ENCODE measurements at regions of chr10 and their contacts with region 1.

Region 1: DNA sequence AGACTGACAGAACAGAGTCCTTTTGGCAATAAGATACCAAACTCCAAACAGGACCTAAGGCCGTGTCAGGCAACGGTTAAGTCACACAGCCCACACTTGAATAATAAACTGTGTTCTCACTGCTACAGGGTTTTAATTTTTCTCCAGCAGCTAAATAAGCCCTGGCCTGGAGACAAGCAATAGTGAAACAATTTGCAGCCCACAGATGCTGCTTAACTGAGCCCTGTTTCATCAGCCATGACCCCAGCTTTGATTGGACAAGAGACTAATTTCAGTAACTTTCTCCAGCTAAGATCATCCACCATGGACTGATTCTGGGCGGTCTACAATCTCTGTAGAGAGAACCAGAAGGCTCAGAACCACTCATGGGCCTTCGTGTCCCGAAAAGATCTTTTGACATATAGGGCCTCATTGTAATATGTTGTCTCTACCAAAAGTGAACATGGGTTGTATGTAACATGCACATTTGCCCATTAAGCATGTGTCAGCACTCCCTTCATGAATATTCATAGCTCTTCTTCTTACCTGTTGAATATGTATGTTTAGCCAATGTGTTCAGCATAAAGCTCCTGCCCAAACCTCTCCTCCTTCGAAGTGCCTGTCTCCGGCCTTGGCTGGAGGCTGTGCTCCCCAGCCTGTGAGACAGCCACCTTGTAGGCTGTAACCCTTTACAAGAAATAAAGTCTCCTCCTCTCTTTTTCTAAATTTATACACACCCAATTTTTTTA is 223.1 kb upstream of the AKR1E2 start:
- DNase-seq: no peak
- H3K4me3 ChIP-seq: no peak overlapping the region
- H3K27ac ChIP-seq: no peak overlapping the region
- H3K4me1 ChIP-seq: no peaks in the 10 kb centered on the region
- H3K27me3 ChIP-seq: no peaks in the 10 kb centered on the region
- CTCF ChIP-seq: no peak

Region 2: DNA sequence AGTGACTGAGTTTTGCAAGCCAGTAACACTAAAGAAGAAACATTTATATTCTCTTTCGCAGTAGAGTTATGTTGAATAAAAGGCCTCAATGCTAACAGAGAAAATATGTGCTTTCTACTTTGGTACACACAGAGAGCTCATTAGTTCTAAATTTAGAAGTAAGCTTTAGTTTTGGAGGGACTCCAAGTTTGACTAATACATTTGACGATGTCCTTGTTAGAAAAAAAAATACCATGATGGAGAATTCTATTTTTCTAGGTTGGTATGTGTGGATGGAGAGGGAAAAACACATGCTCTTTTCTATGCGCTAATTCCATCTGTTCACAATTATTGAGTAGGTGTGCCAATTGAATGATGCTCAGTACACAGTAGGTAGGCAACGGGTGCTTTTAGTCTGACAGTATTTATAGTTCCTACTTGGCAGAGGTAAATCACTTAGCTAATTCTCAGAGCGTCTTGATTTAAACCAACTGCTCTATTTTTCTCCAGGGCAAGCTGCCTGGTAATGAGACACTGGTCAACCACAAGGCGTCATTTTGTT is 104.1 kb before region 1 on chr10:
- CTCF ChIA-PET with region 1: no interaction called
- dilution Hi-C with region 1: loop called (anchors 5 kb)
- in situ Hi-C with region 1: no loop called
- intact Hi-C with region 1: no loop called
- DNase-seq: peak; percentile 40
- H3K4me3 ChIP-seq: no peak overlapping the region
- H3K27ac ChIP-seq: no peak overlapping the region
- H3K4me1 ChIP-seq: peaks cover 10% of the 10 kb centered on the region
- H3K27me3 ChIP-seq: no peaks in the 10 kb centered on the region
- CTCF ChIP-seq: no peak

Region 3: GRCh38 chr10:4561296-4561695 is 41.6 kb before region 1 on chr10:
- CTCF ChIA-PET with region 1: no interaction called
- dilution Hi-C with region 1: no loop called
- in situ Hi-C with region 1: no loop called
- intact Hi-C with region 1: no loop called
- DNase-seq: no peak
- H3K4me3 ChIP-seq: no peak overlapping the region
- H3K27ac ChIP-seq: no peak overlapping the region
- H3K4me1 ChIP-seq: no peaks in the 10 kb centered on the region
- H3K27me3 ChIP-seq: no peaks in the 10 kb centered on the region
- CTCF ChIP-seq: no peak